Thyroid gland (tissue), 4 donors: ENCODE measurements at regions of chr16 and their contacts with region 1.

Region 1: DNA sequence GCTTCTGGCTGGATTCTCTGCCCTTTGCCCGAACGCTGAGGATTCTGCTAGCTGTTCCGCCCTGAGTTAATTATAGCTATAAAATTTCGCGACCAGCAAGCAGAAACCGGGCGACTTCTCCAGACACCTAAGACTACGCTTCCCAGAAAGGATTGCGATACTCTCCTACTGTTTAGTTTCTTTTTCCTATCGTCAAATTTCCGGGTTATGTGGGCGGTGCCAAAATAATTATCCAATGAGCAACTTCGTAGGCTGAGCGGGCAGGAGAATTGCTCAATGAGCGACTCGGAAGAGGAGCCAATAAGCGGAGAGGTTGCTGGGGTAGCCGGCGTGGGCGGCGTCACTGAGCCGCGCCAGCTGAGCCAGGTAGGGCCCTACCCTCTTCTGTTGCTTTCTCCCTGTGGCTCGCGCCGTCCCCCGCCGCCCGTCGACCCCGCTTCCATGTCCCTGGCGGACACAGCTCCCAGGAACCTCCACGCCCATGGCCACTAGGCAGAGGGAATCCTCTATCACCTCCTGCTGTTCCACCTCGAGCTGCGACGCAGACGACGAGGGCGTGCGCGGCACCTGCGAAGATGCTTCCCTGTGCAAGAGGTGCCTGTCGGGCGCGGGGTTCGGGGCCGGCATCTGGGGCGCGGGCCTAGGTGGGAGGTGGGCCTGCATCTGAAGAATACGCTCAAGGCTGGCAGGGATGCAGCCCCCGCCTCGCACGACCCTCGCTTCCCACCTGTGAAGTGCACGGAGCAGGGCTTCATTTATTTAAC is at the start of gene LCMT1:
- DNase-seq: peak; percentile 92 to 94
- H3K4me3 ChIP-seq: peak within 1 kb of the TSS; percentile 73 to 100 (median 78)
- H3K27ac ChIP-seq: peak within 1 kb of the TSS in 2 of 3 donors; percentile 63 to 77
- H3K4me1 ChIP-seq: peaks cover 11 to 34% of the 10 kb centered on the region in 2 donors
- H3K27me3 ChIP-seq: no peaks in the 10 kb centered on the region
- CTCF ChIP-seq: no peak
- POLR2A ChIP-seq: peak in 1 of 2 donors; percentile 72
- total RNA-seq, gene LCMT1: 26.8 to 42.6 (median 29.8) TPM

Region 2: DNA sequence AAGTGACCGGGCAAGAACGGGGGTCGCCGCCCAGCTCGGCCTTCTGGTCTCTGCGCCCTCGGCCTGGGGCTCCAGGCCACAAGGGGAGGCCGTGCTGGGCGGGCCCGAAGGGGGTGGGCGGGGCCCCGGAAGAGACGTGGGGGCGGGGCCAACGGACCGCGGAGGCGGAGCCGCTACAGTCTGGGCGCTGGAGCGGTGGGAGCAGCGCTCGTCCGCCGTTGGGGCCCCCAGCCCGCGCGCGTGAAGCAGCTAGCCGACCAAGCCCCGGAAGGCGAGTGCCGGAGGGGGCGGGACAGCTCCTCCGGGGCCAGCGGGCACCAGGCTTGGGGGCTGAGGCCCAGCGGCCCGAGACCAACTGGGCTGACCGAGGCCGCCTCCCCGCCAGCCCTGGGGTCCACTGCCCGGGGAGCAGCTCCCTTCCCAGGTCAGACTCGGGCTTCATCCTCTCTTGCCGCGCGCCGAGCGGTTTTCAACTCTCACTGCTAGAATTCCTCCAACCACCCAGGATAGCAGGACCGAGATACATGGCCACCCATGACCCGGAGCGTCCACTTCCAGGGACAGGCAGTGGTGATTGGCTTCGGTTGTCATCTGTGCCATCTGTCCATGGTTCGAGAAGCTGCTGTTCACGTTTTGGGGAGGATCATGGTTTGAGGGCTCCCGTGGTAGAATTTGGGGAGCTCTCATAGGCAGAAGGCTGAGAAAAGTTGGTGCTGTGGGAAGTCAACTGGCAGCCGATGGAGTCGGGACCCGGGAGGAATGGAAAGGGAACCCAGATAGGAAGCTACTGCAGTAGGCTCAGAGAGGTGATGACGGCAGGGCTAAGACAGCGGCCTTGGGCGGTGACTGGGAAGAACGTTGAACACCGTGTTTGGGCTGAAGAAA is 44.6 kb before region 1 on chr16:
- intact Hi-C with region 1: loop called (anchors 5 kb)
- DNase-seq: peak; percentile 80 to 85
- H3K4me3 ChIP-seq: peak overlapping the region; percentile 51 to 77 (median 54)
- H3K27ac ChIP-seq: peak overlapping the region; percentile 45 to 84 (median 71)
- H3K4me1 ChIP-seq: peaks cover 0 to 11% of the 10 kb centered on the region in 2 donors
- H3K27me3 ChIP-seq: no peaks in the 10 kb centered on the region
- CTCF ChIP-seq: no peak
- POLR2A ChIP-seq: peak; percentile 8 to 87

Region 3: DNA sequence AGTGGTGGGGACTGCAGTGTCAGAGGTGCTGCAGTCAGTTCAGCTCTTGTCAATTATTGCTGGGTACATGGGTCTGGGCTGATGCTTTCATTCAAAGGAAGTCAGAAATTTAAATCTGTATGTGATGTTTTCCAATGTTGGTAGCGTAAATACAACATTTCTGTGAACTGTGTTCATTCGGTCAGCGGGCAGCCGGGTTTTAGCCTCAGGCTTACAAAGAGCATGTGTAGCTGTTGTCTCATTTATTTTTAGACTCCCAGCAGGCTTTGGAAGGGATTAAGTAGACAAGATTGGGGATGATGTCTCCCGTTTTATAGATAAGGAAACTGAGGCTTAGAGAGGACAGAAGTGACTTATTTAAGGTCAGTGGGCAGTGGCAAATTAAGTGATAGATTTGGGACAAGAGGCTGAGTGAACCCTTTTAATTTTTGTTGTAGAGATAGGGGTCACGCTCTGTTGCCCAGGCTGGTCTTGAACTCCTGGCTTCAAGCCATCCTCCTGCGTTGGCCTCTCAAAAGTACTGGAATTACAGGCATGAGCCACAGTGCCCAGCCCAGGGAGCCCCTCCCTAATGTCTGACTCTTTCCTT is 113.2 kb after region 1 on chr16:
- intact Hi-C with region 1: loop called (anchors 10 kb)
- DNase-seq: peak in 1 of 2 donors; percentile 88
- H3K4me3 ChIP-seq: no peak overlapping the region
- H3K27ac ChIP-seq: peak overlapping the region in 1 of 3 donors; percentile 7
- H3K4me1 ChIP-seq: peaks cover 5 to 6% of the 10 kb centered on the region in 2 donors
- H3K27me3 ChIP-seq: no peaks in the 10 kb centered on the region
- CTCF ChIP-seq: no peak
- POLR2A ChIP-seq: no peak

Region 4: GRCh38 chr16:25340973-25341372 is 229.4 kb after region 1 on chr16:
- intact Hi-C with region 1: no loop called
- DNase-seq: no peak
- H3K4me3 ChIP-seq: no peak overlapping the region
- H3K27ac ChIP-seq: no peak overlapping the region
- H3K4me1 ChIP-seq: no peaks in the 10 kb centered on the region
- H3K27me3 ChIP-seq: no peaks in the 10 kb centered on the region
- CTCF ChIP-seq: no peak
- POLR2A ChIP-seq: no peak